Activated B cell treated with CpG ODN at 0.5 μM for 24 hours (primary cell): ENCODE measurements at regions of chr3 and their contacts with region 1.

Region 1: GRCh38 chr3:188154014-188154808 is at the start of gene LPP:
- DNase-seq: peak; percentile 88
- ATAC-seq: peak; percentile 89
- H3K4me3 Mint-ChIP-seq: peak within 1 kb of the TSS; percentile 96
- H3K27ac Mint-ChIP-seq: peak within 1 kb of the TSS; percentile 92
- H3K4me1 Mint-ChIP-seq: peaks cover 51% of the 10 kb centered on the region
- H3K27me3 Mint-ChIP-seq: no peaks in the 10 kb centered on the region
- CTCF ChIP-seq: no peak
- total RNA-seq, gene LPP: 49.5 and 60.1 TPM in 2 replicates

Region 2: GRCh38 chr3:187902041-187902471 is 252.2 kb before region 1 on chr3:
- CTCF ChIA-PET with region 1: no interaction called
- POLR2A ChIA-PET with region 1: interaction called, 10 read pairs
- intact Hi-C with region 1: no loop called
- DNase-seq: peak; percentile 22
- ATAC-seq: peak; percentile 86
- H3K4me3 Mint-ChIP-seq: peak overlapping the region; percentile 29
- H3K27ac Mint-ChIP-seq: peak overlapping the region; percentile 1
- H3K4me1 Mint-ChIP-seq: peaks cover 16% of the 10 kb centered on the region
- H3K27me3 Mint-ChIP-seq: peaks cover 26% of the 10 kb centered on the region
- CTCF ChIP-seq: no peak

Region 3: GRCh38 chr3:188037216-188037718 is 116.9 kb before region 1 on chr3:
- CTCF ChIA-PET with region 1: no interaction called
- POLR2A ChIA-PET with region 1: no interaction called
- intact Hi-C with region 1: no loop called
- DNase-seq: no peak
- ATAC-seq: no peak
- H3K4me3 Mint-ChIP-seq: no peak overlapping the region
- H3K27ac Mint-ChIP-seq: no peak overlapping the region
- H3K4me1 Mint-ChIP-seq: peaks cover 17% of the 10 kb centered on the region
- H3K27me3 Mint-ChIP-seq: no peaks in the 10 kb centered on the region
- CTCF ChIP-seq: no peak

Region 4: GRCh38 chr3:188108703-188109412 is 45.4 kb before region 1 on chr3:
- CTCF ChIA-PET with region 1: no interaction called
- POLR2A ChIA-PET with region 1: no interaction called
- intact Hi-C with region 1: loop called (anchors 2 kb)
- DNase-seq: no peak
- ATAC-seq: peak; percentile 73
- H3K4me3 Mint-ChIP-seq: peak overlapping the region; percentile 42
- H3K27ac Mint-ChIP-seq: peak overlapping the region; percentile 78
- H3K4me1 Mint-ChIP-seq: peaks cover 26% of the 10 kb centered on the region
- H3K27me3 Mint-ChIP-seq: no peaks in the 10 kb centered on the region
- CTCF ChIP-seq: no peak

Region 5: DNA sequence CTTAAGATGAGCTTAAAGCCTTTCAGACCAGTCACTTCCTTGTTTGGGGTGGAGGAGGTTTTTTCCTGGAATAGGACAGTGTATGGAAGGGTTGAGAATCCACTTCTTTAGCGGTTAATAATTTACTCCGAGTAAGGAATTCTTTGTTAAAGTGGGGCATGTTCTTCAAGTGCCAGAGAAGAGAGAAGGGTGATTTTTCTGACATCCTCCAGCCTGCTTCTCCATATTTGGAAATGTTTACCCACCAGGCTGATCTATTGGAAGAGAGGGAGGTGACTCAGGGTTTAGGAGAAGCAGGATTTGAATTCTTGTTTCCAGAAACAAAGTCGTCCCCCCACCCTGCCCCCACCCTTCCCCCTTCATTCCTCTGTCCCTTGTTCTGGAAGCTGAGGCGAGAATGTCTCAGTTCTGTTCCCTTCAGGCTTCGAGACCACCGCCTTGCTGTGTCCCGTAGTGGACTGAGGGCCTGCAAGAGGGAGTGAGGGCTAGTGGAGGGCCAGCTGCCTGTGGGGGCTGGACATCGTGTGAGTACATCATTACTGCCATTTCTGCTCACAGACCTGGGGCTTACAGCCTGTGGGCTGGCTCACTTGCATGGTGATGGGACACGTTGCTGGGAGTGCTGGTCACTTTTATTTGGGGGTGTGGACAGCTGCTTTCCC is 58.2 kb after region 1 on chr3:
- CTCF ChIA-PET with region 1: no interaction called
- POLR2A ChIA-PET with region 1: interaction called, 7 read pairs
- intact Hi-C with region 1: loop called (anchors 1 kb)
- DNase-seq: no peak
- ATAC-seq: no peak
- H3K4me3 Mint-ChIP-seq: no peak overlapping the region
- H3K27ac Mint-ChIP-seq: peak overlapping the region; percentile 88
- H3K4me1 Mint-ChIP-seq: peaks cover 43% of the 10 kb centered on the region
- H3K27me3 Mint-ChIP-seq: no peaks in the 10 kb centered on the region
- CTCF ChIP-seq: no peak

Region 6: DNA sequence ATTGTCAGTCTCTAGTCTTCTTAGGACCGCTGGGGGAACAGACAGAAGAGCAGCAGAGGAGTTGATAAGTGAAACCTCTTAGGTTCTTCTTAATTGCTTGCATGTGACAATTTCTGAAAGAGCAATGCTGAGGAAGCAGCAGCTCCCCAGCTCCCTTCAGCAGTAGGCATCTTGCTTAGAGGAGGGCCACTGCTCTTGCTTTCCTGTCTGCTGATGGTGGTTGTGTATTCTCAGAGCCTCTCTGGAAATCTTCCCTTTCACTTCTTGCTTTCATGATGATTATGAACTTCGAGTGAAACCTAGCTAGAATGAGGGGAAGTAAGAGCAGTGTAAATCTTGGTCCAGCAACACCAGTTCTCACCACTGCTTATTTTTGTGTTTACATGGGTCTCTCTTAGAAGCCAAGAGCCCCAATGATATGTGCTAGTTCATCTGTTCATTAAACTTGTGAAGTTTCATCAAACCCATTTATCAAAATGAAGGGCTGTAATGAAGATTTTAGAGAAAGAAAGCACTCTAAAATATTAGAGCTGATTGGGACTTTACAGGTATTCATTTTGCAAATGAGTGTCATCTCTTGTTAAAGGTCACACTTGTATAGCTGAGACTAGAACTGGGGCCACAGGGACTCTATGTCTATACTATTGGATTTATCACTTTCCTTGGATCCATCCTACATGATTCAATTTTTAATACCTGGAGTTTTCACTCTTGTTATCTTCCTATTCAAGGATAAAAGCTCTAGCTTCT is 246.5 kb after region 1 on chr3:
- CTCF ChIA-PET with region 1: no interaction called
- POLR2A ChIA-PET with region 1: interaction called, 6 read pairs
- intact Hi-C with region 1: loop called (anchors 5 kb)
- DNase-seq: no peak
- ATAC-seq: peak; percentile 82
- H3K4me3 Mint-ChIP-seq: peak overlapping the region; percentile 56
- H3K27ac Mint-ChIP-seq: peak overlapping the region; percentile 91
- H3K4me1 Mint-ChIP-seq: peaks cover 93% of the 10 kb centered on the region
- H3K27me3 Mint-ChIP-seq: no peaks in the 10 kb centered on the region
- CTCF ChIP-seq: no peak

Region 7: DNA sequence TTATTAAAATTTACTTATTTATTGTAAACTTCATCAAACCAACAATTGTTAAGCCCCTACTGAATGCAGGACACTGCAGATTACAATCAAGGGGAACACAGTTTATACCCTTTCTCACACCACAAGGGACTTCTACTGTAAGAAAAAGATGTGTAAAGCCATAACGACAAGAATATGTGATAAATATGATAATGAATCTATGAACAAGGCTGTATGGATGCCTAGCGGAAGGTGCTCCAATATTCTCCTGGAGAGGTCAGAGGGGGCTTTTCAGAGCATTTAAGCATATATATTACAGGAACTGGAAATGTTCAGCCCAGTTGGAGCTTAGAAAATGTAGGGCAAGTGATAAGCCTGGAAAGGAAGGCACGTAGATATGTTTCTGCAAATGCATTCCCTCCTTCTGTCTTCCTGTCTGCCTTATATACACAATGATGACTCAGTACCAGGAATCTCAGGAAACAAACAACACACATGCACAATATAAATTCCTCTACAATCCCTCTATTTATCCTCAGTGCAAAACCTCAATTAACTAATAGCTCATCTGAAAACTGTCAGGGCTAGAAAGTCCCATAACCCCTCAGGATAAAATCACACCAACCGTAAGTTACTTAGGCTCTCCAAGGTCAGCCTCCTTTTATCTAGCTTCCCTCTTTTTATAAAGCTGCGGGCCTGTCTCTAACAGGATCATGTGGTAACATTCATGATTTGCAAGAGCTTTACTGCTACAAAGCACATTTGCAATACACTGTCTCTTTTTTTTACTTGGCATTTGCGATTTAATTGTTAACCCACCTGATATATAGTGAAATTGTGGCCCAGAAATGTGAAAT is 392.8 kb after region 1 on chr3:
- CTCF ChIA-PET with region 1: no interaction called
- POLR2A ChIA-PET with region 1: no interaction called
- intact Hi-C with region 1: no loop called
- DNase-seq: no peak
- ATAC-seq: no peak
- H3K4me3 Mint-ChIP-seq: no peak overlapping the region
- H3K27ac Mint-ChIP-seq: no peak overlapping the region
- H3K4me1 Mint-ChIP-seq: peaks cover 5% of the 10 kb centered on the region
- H3K27me3 Mint-ChIP-seq: no peaks in the 10 kb centered on the region
- CTCF ChIP-seq: no peak

Region 8: DNA sequence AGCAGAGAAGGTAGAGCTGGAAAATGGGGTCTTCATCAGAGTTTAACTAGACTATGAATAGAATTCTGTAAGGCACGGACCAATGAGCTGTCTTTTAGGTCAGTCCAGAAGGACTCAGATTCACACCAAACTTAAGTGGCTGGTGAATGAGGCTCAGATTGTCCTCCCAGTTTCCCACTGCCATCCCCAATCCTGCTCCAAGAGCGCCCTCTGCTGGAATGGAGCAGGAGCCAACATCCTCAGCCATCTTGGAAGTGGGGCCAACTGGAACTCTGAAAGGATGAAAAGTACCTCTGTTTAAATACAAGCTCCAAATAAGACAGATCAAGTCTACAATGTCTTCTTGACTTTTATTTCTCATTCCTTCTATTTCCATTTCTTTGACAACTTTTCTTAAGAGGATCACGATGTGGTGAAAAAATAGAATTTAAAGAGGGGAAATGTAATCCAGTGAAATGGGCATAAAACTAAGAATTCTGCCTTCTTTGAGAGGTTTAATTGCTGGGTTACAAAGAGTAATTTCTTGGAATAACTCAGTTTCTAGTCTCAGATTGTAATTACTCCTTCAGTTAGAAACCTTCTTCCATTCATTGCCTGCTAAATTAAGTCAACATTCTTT is 800.5 kb after region 1 on chr3:
- CTCF ChIA-PET with region 1: interaction called, 3 read pairs
- POLR2A ChIA-PET with region 1: no interaction called
- intact Hi-C with region 1: loop called (anchors 5 kb)
- DNase-seq: peak; percentile 60
- ATAC-seq: peak; percentile 66
- H3K4me3 Mint-ChIP-seq: no peak overlapping the region
- H3K27ac Mint-ChIP-seq: no peak overlapping the region
- H3K4me1 Mint-ChIP-seq: peaks cover 25% of the 10 kb centered on the region
- H3K27me3 Mint-ChIP-seq: peaks cover 1% of the 10 kb centered on the region
- CTCF ChIP-seq: no peak